ENCODE measurements at regions of chr10 and their contacts with region 1.

Region 1: DNA sequence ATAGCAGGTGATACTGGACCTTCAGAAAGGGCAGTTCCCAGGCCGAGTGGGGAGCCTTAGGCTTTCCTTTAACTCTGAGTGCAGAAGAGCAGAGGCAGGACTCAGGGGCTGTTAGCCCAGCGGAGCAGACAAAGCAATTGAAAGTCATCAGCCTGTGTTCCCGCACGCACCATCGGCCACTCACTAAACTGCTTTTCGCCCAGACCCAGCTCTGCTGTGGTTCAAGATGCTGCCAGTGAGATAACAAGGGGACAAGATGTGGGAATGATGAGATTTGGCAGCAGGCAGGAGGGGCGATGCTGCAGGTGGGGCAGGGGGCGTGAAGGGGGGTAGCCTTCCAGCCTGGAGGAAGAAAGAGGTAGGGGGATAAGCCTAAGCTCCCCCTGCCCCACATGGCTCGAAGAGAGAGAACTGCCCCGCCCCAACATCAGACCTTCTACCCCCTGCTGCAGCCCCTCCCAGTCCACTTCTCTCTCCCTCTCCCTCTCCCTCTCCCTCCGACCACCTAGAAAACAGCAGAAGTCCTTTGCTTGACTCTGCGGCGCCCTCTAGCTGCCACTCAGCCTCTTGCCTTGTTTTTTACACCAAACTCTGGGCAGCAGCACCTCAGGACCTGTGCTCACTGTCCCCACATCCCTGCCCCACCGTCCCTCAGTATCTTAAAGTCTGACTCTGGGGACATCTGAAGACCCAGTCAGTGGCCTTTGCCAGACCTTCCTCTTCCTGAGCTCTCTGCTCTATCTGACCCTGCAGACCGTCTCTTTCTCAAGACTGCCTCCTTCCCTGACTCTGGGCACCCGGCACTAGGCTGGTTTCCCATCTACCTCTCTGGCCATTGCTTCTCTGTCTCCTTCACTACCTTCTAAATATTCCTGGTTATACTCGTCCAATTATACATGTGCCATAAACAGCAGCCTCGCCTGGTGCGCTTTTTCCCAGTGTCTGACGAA is 110.5 kb downstream of the C10orf105 start:
- DNase-seq: peak; percentile 83
- H3K4me3 ChIP-seq: no peak overlapping the region; a peak in 1 of 4 replicates
- H3K27ac ChIP-seq: no peak overlapping the region
- H3K4me1 ChIP-seq: peaks cover 6 to 17% of the 10 kb centered on the region in 2 experiments; a peak in 3 of 4 replicates
- H3K27me3 ChIP-seq: 0 out of 2 replicates have a peak, but pooled peaks cover 4% of the 10 kb centered on the region
- CTCF ChIP-seq: peak; percentile 81
- EP300 ChIP-seq: no peak
- RAD21 ChIP-seq: peak; percentile 83

Region 2: GRCh38 chr10:71314028-71314693 is 294.9 kb before region 1 on chr10:
- CTCF ChIA-PET with region 1: interaction called, 17 read pairs
- POLR2A ChIA-PET with region 1: no interaction called
- DNase-seq: peak; percentile 81
- H3K4me3 ChIP-seq: no peak overlapping the region
- H3K27ac ChIP-seq: no peak overlapping the region
- H3K4me1 ChIP-seq: peaks cover 0 to 11% of the 10 kb centered on the region in 2 experiments; a peak in 1 of 4 replicates
- H3K27me3 ChIP-seq: no peaks in the 10 kb centered on the region
- CTCF ChIP-seq: peak; percentile 69
- EP300 ChIP-seq: no peak
- RAD21 ChIP-seq: peak; percentile 80

Region 3: GRCh38 chr10:71383972-71384687 is 225.0 kb before region 1 on chr10:
- CTCF ChIA-PET with region 1: interaction called, 57 read pairs
- POLR2A ChIA-PET with region 1: no interaction called
- DNase-seq: peak; percentile 84
- H3K4me3 ChIP-seq: no peak overlapping the region; a peak in 1 of 4 replicates
- H3K27ac ChIP-seq: no peak overlapping the region
- H3K4me1 ChIP-seq: no peaks in the 10 kb centered on the region
- H3K27me3 ChIP-seq: peaks cover 30% of the 10 kb centered on the region; the same call in 1 of the 2 replicates
- CTCF ChIP-seq: peak; percentile 89
- EP300 ChIP-seq: no peak
- RAD21 ChIP-seq: peak; percentile 80

Region 4: DNA sequence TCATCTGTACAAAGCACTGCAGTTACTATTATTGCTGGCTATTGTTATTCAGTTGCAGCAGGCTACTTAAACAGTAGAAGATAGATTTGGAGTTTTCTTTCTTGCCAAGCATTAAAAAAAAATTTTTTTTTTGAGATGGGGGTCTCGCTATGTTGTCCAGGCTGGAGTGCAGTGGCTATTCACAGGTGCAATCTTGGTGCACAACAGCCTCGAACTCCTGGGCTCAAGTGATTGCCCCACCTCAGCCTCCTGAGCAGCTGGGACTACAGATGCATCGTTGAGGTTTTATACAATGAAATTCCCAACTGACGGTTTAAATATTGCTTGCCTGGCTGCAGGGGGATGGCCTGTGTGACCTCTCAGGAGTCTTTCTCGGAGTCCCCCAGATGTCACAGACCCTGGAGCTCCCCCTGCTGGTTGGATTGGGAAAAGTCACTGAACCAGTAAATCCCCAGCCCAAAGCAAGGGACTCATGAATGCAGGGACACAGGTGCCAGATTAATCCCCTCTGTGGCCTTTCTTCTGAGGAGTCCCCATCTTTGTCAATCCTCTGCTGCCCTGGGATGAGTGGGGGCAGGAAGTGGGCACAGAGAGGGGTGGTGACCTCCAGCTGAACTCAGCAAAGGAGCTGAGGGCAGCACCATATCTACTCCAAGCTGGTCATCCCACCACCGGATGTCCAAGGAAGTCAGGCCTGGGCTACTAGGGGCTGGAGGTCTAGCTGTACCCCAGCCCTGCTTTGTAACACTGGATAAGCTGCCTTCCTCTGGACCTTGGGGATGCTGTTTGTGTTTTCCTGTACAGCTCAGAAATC is 39.1 kb before region 1 on chr10:
- CTCF ChIA-PET with region 1: interaction called, 43 read pairs
- POLR2A ChIA-PET with region 1: no interaction called
- DNase-seq: peak; percentile 86
- H3K4me3 ChIP-seq: peak overlapping the region in 1 of 2 experiments; percentile 44; a peak in 1 of 4 replicates
- H3K27ac ChIP-seq: no peak overlapping the region
- H3K4me1 ChIP-seq: no peaks in the 10 kb centered on the region; a peak in 1 of 4 replicates
- H3K27me3 ChIP-seq: peaks cover 3% of the 10 kb centered on the region
- CTCF ChIP-seq: peak; percentile 84
- EP300 ChIP-seq: no peak
- RAD21 ChIP-seq: peak; percentile 80

Region 5: GRCh38 chr10:71623098-71623985 is 14.2 kb after region 1 on chr10:
- CTCF ChIA-PET with region 1: interaction called, 74 read pairs
- POLR2A ChIA-PET with region 1: no interaction called
- DNase-seq: no peak
- H3K4me3 ChIP-seq: no peak overlapping the region
- H3K27ac ChIP-seq: no peak overlapping the region
- H3K4me1 ChIP-seq: peaks cover 20 to 30% of the 10 kb centered on the region in 2 experiments; a peak in 1 of 4 replicates
- H3K27me3 ChIP-seq: no peaks in the 10 kb centered on the region; the same call in 1 of the 2 replicates
- CTCF ChIP-seq: peak; percentile 36; the same call in 1 of the 2 replicates
- EP300 ChIP-seq: no peak
- RAD21 ChIP-seq: no peak

Region 6: GRCh38 chr10:71696628-71697326 is 87.7 kb after region 1 on chr10:
- CTCF ChIA-PET with region 1: interaction called, 22 read pairs
- POLR2A ChIA-PET with region 1: no interaction called
- DNase-seq: peak; percentile 88
- H3K4me3 ChIP-seq: no peak overlapping the region; a peak in 1 of 4 replicates
- H3K27ac ChIP-seq: no peak overlapping the region
- H3K4me1 ChIP-seq: peaks cover 0 to 7% of the 10 kb centered on the region in 2 experiments; a peak in 1 of 4 replicates
- H3K27me3 ChIP-seq: peaks cover 28% of the 10 kb centered on the region; the same call in 1 of the 2 replicates
- CTCF ChIP-seq: peak; percentile 82
- EP300 ChIP-seq: no peak
- RAD21 ChIP-seq: peak; percentile 64